Dorsolateral prefrontal cortex (tissue), 120 donors: ENCODE measurements at regions of chr11 and their contacts with region 1.

Region 1: GRCh38 chr11:7577291-7578190 is 63.7 kb downstream of the PPFIBP2 start:
- DNase-seq: peak; percentile 10 to 89 (median 78)
- H3K4me3 ChIP-seq: peak overlapping the region; percentile 11 to 71 (median 48)
- H3K27ac ChIP-seq: peak overlapping the region; percentile 80 to 99 (median 97)
- H3K27me3 ChIP-seq: no peaks in the 10 kb centered on the region
- CTCF ChIP-seq: peak in 27 of 56 donors; percentile 1 to 58 (median 25)

Region 2: DNA sequence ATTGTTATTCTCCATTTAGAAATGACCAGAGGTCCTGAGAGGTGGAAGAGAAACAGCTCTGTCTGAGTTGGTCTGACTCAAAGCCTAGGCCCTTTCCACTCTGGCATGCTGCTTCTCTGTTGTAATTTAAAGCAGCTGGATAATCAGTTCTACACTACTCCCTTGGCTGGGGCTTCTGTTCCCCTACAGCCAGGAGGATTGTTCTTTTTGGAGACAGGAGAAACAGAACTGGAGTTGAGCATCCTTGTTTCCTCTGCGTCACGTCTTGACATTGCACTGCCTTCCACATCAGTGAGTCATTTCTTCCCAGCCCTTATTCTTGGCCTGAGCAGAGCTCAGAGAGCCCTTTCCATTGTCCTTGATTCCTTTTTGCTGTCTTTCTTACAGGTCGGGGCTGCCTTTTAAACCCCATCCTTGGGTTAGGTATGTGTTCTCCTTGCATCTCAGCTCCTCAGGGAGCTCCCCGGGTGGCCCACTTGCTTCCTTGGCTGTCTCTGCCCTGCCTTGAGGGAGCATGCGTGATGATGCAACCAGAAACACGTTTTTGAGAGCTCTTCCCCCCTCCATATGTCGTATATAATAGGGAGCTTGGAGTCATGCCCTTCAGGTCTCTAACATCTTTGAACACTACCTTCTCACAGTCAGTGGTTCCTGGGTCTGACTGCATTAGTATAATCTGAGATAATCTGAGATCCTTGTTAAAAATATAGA is 60.1 kb after region 1 on chr11:
- intact Hi-C with region 1: loop called in 1 of 2 experiments (anchors 10 kb)
- DNase-seq: no peak
- H3K4me3 ChIP-seq: no peak overlapping the region
- H3K27ac ChIP-seq: peak overlapping the region in 37 of 59 donors; percentile 17 to 81 (median 55)
- H3K27me3 ChIP-seq: no peaks in the 10 kb centered on the region
- CTCF ChIP-seq: no peak